BJ (cell line): ENCODE measurements at regions of chr3 and their contacts with region 1.

Region 1: GRCh38 chr3:52056968-52057805 is 816 bp upstream of the DUSP7 start:
- DNase-seq: peak; percentile 91
- H3K4me3 ChIP-seq: peak overlapping the region; percentile 94
- H3K27me3 ChIP-seq: no peaks in the 10 kb centered on the region
- CTCF ChIP-seq: no peak

Region 2: GRCh38 chr3:51696954-51697353 is 360.2 kb before region 1 on chr3:
- CTCF ChIA-PET with region 1: no interaction called
- POLR2A ChIA-PET with region 1: no interaction called
- DNase-seq: no peak
- H3K4me3 ChIP-seq: no peak overlapping the region
- H3K27me3 ChIP-seq: no peaks in the 10 kb centered on the region
- CTCF ChIP-seq: no peak

Region 3: GRCh38 chr3:52093756-52094545 is 36.8 kb after region 1 on chr3:
- CTCF ChIA-PET with region 1: interaction called, 12 read pairs
- POLR2A ChIA-PET with region 1: no interaction called
- DNase-seq: no peak
- H3K4me3 ChIP-seq: no peak overlapping the region
- H3K27me3 ChIP-seq: no peaks in the 10 kb centered on the region
- CTCF ChIP-seq: no peak

Region 4: GRCh38 chr3:52108302-52109232 is 51.4 kb after region 1 on chr3:
- CTCF ChIA-PET with region 1: interaction called, 17 read pairs
- POLR2A ChIA-PET with region 1: no interaction called
- DNase-seq: no peak
- H3K4me3 ChIP-seq: no peak overlapping the region
- H3K27me3 ChIP-seq: no peaks in the 10 kb centered on the region
- CTCF ChIP-seq: peak; percentile 52

Region 5: DNA sequence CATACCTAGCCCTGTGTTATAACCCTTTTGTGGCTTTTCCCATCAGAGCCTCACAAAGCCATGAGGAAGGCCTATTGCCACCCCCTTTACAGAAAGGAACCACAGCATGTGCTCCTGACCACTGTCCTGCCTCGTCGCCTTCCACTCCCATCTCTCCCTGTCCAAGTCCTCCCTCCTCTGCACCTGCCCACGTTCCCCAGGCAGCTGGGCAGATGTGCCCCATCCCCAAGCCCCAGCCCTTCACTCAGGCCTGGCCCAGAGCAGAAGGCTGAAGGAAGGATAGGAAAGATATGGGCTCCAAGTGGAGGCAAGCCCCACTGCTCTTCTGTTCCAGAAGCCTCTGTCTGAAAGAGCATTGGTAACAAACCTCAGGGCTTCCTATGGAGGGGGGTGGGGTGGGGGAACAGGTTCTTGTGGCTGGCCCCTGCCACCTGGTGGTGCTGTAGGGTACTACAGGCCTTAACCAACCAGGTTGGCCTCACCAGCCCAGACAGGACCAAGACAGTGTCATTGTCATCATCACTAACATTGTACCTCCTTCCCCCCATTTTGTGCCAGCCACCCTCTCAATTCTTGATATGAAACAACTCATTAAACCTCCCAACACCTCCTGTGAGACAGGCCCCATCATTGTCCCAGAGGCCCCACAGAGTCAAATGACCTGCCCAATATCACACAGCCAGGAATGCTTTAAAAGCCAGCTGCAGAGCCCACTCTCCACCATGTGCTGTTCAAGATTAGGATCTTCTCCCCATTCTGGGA is 87.0 kb after region 1 on chr3:
- CTCF ChIA-PET with region 1: interaction called, 15 read pairs
- POLR2A ChIA-PET with region 1: no interaction called
- DNase-seq: no peak
- H3K4me3 ChIP-seq: no peak overlapping the region
- H3K27me3 ChIP-seq: no peaks in the 10 kb centered on the region
- CTCF ChIP-seq: peak; percentile 95

Region 6: GRCh38 chr3:52915294-52915693 is 858.1 kb after region 1 on chr3:
- CTCF ChIA-PET with region 1: no interaction called
- POLR2A ChIA-PET with region 1: no interaction called
- DNase-seq: no peak
- H3K4me3 ChIP-seq: no peak overlapping the region
- H3K27me3 ChIP-seq: no peaks in the 10 kb centered on the region
- CTCF ChIP-seq: no peak